ENCODE measurements at regions of chr13 and their contacts with region 1.

Region 1: DNA sequence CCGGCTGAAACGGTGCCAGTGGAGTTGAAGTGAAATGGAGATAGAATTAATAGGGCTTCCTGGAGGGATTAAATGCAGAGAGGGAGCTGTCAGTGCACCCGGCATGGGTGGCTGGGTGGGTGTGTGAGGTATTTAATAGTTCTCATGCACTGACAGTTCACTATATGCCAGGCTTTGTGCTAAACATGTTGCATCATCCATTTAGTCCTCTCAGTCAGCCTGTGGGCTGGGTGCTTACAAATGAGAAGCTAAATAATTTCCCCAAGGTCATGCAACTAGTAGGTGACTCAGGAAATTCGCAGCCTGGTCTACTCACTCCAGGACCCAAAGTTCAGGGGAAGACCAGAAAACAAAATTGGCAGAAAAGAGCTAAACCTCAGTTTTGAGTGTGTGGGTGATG is 63.5 kb upstream of the SPATA13 start:
- DNase-seq: peak; percentile 75
- H3K4me3 Mint-ChIP-seq: no peak overlapping the region
- H3K27ac Mint-ChIP-seq: peak overlapping the region; percentile 76
- H3K4me1 Mint-ChIP-seq: peaks cover 17% of the 10 kb centered on the region
- H3K27me3 Mint-ChIP-seq: peaks cover 19% of the 10 kb centered on the region

Region 2: DNA sequence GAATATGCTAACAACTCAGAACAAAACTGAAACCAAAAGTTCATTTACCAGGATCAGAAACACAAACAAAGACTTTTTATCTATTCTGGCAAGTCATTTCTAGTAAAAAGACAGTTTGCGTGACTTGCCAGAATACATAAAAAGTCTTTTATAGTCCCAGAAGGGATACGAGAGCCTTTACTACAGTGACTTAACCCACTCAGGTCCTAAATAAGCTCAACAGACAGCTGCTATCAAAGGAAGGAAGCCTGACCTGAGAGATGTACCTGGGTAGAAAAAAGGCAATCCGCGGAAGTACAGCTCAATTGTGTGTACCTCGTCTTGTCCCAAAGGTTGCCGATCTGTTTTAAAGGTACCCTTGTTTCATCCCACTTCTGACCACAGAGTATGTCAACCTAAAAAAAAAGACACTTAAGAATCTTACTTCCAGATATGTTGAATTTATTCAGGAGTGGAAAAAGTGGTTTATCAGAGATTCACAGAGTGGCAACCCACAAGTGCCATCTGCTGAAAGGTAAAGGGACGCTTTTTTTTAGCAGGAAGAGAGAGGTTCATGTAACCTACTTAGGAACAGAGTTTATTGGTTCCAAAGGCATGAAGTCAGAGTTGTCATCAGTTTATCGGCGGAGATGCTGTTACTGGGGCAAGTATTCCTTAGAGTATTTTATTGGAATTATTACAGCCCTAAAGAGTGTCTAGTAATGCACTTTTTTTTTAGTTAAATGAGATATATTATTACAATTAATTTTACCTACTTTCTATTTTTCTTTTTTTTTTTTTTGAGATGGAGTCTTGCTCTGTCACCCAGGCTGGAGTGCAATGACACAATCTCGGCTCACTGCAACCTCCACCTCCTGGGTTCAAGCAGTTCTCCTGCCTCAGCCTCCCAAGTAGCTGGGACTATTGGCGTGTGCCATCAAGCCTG is 130.1 kb before region 1 on chr13:
- CTCF ChIA-PET with region 1: no interaction called
- POLR2A ChIA-PET with region 1: no interaction called
- intact Hi-C with region 1: loop called (anchors 1 kb)
- DNase-seq: peak; percentile 31
- H3K4me3 Mint-ChIP-seq: peak overlapping the region; percentile 51
- H3K27ac Mint-ChIP-seq: peak overlapping the region; percentile 83
- H3K4me1 Mint-ChIP-seq: peaks cover 30% of the 10 kb centered on the region
- H3K27me3 Mint-ChIP-seq: no peaks in the 10 kb centered on the region

Region 3: DNA sequence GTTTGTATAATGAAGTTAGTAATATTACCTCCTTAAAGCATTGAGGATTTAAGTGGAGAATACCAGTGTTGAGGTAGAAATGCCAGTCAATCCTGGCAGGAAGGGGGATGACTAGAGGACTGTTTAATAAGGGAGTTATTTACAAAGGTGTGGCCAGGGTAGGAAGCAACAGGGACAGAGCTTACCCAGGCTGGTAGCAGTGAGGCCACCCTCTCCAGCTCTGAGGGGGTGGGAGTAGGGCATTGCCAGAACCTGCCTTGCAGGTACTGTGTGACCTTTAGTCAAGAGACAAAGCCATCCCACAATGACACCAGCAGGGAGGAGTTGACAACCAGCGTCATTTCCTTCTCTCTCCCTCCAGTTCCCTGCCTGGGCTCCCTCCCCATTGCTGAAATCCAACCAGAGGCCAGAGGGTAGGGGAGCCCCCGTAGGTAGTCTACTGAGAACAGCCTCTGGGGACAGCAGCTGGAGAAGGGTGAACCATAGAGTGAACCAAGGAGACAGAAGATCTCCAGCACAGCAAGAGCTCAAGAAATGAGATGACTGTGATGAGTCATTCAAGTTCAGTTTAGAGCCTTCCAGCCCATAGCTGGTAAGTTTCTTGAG is 30.1 kb after region 1 on chr13:
- CTCF ChIA-PET with region 1: interaction called, 5 read pairs
- POLR2A ChIA-PET with region 1: interaction called, 9 read pairs
- intact Hi-C with region 1: loop called (anchors 1 kb)
- DNase-seq: peak; percentile 70
- H3K4me3 Mint-ChIP-seq: no peak overlapping the region
- H3K27ac Mint-ChIP-seq: no peak overlapping the region
- H3K4me1 Mint-ChIP-seq: peaks cover 25% of the 10 kb centered on the region
- H3K27me3 Mint-ChIP-seq: peaks cover 60% of the 10 kb centered on the region

Region 4: DNA sequence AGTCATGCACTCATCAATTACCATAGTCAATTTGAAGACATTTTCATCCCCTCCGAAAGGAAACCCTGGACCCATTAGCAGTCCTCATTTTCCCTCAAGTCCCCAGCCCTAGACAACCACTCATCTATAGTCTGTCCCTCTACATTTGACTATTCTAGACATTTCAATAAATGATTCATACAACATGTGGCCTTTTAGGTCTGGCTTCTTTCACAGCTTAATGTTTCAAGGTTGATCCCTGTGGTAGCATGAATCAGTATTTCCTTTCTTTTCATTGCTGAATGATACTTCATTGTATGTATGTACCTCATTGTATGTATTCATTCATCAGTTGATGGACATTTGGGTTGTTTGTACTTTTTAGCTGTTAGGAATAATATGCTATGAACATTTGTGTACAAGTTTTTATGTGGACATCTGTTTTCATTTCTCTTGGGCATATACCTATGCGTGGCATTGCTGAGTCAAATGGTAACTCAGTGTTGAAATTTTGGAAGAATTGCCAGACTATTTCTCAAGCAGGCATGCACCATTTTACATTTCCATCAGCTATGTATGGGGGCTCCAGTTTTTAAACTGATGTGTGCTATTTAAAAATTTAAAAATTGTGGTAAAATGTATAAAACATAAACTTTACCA is 81.9 kb after region 1 on chr13:
- CTCF ChIA-PET with region 1: interaction called, 6 read pairs
- POLR2A ChIA-PET with region 1: interaction called, 3 read pairs
- intact Hi-C with region 1: loop called (anchors 2 kb)
- DNase-seq: no peak
- H3K4me3 Mint-ChIP-seq: no peak overlapping the region
- H3K27ac Mint-ChIP-seq: no peak overlapping the region
- H3K4me1 Mint-ChIP-seq: peaks cover 26% of the 10 kb centered on the region
- H3K27me3 Mint-ChIP-seq: no peaks in the 10 kb centered on the region

Region 5: DNA sequence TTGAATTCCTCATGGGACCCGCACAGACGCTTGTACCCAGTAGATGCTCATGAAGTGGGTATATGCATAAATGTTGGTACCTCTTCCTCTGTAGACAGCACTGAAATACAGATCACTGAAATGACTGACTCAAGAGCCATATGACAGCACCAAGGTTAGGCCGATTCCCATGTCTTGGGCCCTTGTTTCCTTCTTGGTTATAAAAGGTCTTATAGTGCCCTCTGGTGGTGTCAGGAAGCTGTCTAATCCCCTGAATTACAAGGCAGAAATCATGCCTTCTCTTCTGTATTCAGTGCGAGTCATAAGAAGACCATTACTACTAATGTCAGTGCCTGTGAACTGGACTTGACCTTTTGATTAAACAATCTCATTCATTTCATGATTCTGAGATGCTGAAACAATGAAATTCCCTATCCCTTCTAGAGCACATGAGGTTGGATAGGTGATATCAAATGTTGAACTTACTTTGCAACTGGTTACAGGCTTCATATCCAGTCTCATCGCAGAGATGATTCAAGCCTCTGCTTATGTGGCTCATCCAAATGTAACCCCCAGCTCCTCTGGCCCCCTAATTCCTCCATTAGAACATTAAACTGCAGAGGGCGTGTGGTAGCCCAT is 123.1 kb after region 1 on chr13:
- CTCF ChIA-PET with region 1: interaction called, 11 read pairs
- POLR2A ChIA-PET with region 1: no interaction called
- intact Hi-C with region 1: loop called (anchors 1 kb)
- DNase-seq: peak; percentile 61
- H3K4me3 Mint-ChIP-seq: no peak overlapping the region
- H3K27ac Mint-ChIP-seq: no peak overlapping the region
- H3K4me1 Mint-ChIP-seq: peaks cover 34% of the 10 kb centered on the region
- H3K27me3 Mint-ChIP-seq: no peaks in the 10 kb centered on the region